Activated naive CD4-positive, alpha-beta T cell treated with anti-CD3 and anti-CD28 coated beads for 36 hours (primary cell): ENCODE measurements at regions of chr2 and their contacts with region 1.

Region 1: DNA sequence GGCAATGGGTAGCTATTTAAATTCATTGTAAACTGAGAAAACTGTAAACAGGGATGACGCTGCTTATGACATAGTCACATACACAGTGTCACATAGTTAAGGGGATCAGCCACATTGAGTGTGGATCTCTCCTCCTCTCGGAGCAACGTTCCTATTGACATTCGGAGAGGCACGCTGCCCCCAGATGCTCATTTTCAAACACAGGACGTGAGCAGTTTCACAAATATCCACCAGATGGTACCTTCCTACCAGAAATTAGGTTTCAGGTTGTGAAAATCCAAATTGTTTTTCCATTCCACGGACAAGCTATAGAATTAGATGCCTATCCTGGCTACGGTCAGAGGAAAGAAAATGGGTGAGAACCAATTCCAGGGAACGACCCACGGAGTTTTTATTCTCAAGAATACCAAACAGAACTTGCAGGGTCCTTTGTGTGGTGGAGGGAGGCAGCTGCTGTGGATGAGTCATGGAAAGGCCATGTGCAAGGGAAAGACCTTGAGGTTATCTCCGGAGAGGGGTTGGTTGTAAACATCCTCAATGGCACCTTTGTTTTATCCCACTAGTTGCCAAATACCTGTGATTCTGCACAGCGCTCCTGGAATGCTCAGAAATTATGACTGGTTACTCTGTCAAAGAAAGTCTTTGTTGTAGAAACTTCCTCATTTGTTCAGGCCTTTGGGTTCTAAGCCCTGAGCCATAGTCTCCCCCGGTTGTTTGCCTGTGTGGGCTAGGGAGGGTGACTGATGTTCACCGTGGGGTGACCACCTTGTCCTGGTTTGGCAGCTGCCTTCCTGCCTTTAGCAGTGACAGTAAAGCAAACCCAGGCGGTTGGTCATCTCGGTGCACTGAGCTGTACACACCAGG is 88.0 kb downstream of the ACTR3 start:
- DNase-seq: no peak
- H3K4me3 Mint-ChIP-seq: no peak overlapping the region
- H3K27ac Mint-ChIP-seq: no peak overlapping the region
- H3K4me1 Mint-ChIP-seq: no peaks in the 10 kb centered on the region
- H3K27me3 Mint-ChIP-seq: no peaks in the 10 kb centered on the region

Region 2: DNA sequence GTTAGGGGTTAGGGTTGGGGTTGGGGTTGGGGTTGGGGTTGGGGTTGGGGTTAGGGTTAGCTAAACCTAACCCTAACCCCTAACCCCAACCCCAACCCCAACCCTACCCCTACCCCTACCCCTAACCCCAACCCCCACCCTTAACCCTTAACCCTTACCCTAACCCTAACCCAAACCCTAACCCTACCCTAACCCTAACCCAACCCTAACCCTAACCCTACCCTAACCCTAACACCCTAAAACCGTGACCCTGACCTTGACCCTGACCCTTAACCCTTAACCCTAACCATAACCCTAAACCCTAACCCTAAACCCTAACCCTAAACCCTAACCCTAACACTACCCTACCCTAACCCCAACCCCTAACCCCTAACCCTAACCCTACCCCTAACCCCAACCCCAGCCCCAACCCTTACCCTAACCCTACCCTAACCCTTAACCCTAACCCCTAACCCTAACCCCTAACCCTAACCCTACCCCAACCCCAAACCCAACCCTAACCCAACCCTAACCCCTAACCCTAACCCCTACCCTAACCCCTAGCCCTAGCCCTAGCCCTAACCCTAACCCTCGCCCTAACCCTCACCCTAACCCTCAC is 374.9 kb before region 1 on chr2:
- CTCF ChIA-PET with region 1: no interaction called
- intact Hi-C with region 1: loop called (anchors 5 kb)
- DNase-seq: no peak
- H3K4me3 Mint-ChIP-seq: peak overlapping the region; percentile 93
- H3K27ac Mint-ChIP-seq: peak overlapping the region; percentile 84
- H3K4me1 Mint-ChIP-seq: peaks cover 9% of the 10 kb centered on the region
- H3K27me3 Mint-ChIP-seq: no peaks in the 10 kb centered on the region

Region 3: DNA sequence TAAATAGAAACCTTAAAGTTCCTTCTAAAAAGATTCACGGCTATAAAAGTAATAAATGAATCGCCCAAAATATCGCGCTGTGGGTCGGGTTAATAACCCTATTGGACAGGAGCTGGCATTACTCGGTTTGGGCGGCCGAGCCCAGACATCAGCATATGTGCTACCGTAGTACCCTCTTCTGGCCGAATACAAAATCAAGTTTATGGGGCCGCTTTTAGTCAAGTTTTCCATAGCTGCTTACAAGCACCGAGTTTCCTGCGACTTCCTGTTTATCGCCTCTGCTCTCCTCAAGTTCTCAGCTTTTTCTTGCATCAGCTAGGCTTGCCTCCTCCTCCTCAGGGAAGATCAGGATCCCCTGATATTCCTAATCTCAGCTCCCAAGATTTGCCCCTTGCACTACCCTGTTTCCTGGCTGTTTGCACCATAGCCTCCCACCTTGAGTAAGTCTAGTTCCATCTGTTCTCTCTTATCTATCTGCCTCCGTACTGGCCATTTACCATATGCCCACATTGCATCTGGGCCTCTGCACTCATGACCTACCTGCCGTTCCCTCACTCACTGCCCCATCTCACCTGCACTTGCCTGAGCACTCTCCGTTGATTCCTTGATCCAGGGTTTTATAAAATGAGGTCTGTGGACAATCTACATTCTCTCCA is 277.6 kb before region 1 on chr2:
- CTCF ChIA-PET with region 1: interaction called, 4 read pairs
- intact Hi-C with region 1: loop called (anchors 5 kb)
- DNase-seq: peak; percentile 71
- H3K4me3 Mint-ChIP-seq: peak overlapping the region; percentile 40
- H3K27ac Mint-ChIP-seq: peak overlapping the region; percentile 54
- H3K4me1 Mint-ChIP-seq: peaks cover 25% of the 10 kb centered on the region
- H3K27me3 Mint-ChIP-seq: no peaks in the 10 kb centered on the region

Region 4: GRCh38 chr2:113791697-113792590 is 185.9 kb before region 1 on chr2:
- CTCF ChIA-PET with region 1: interaction called, 4 read pairs
- intact Hi-C with region 1: loop called (anchors 2 kb)
- DNase-seq: peak; percentile 59
- H3K4me3 Mint-ChIP-seq: peak overlapping the region; percentile 26
- H3K27ac Mint-ChIP-seq: peak overlapping the region; percentile 94
- H3K4me1 Mint-ChIP-seq: peaks cover 36% of the 10 kb centered on the region
- H3K27me3 Mint-ChIP-seq: no peaks in the 10 kb centered on the region

Region 5: GRCh38 chr2:113799375-113799774 is 178.5 kb before region 1 on chr2:
- CTCF ChIA-PET with region 1: interaction called, 4 read pairs
- intact Hi-C with region 1: loop called (anchors 2 kb)
- DNase-seq: no peak
- H3K4me3 Mint-ChIP-seq: no peak overlapping the region
- H3K27ac Mint-ChIP-seq: no peak overlapping the region
- H3K4me1 Mint-ChIP-seq: peaks cover 13% of the 10 kb centered on the region
- H3K27me3 Mint-ChIP-seq: no peaks in the 10 kb centered on the region

Region 6: DNA sequence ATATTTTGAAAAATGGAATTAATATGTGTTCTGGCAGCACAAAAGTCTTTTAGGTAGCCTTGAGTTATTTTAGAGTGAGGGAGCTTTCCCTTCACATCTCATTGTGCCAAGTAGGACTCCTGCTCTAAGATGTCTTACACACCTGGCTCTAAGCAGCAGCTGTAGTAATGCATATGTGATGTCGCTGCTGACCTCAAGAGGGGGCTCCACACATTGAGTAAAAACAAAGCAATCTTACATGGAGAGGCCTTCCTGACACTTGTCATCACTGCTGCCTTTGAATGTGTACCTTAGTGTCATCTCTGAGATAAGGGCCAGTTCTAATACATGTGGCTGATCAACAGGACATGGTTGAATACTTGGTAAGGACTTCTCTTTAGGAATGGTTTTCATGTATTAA is 12.2 kb before region 1 on chr2:
- CTCF ChIA-PET with region 1: interaction called, 37 read pairs
- intact Hi-C with region 1: no loop called
- DNase-seq: peak; percentile 56
- H3K4me3 Mint-ChIP-seq: no peak overlapping the region
- H3K27ac Mint-ChIP-seq: peak overlapping the region; percentile 26
- H3K4me1 Mint-ChIP-seq: peaks cover 25% of the 10 kb centered on the region
- H3K27me3 Mint-ChIP-seq: no peaks in the 10 kb centered on the region

Region 7: GRCh38 chr2:114089636-114090319 is 111.9 kb after region 1 on chr2:
- CTCF ChIA-PET with region 1: no interaction called
- intact Hi-C with region 1: no loop called
- DNase-seq: no peak
- H3K4me3 Mint-ChIP-seq: no peak overlapping the region
- H3K27ac Mint-ChIP-seq: no peak overlapping the region
- H3K4me1 Mint-ChIP-seq: no peaks in the 10 kb centered on the region
- H3K27me3 Mint-ChIP-seq: peaks cover 4% of the 10 kb centered on the region